ENCODE measurements at regions of chr4 and their contacts with region 1.

Region 1: DNA sequence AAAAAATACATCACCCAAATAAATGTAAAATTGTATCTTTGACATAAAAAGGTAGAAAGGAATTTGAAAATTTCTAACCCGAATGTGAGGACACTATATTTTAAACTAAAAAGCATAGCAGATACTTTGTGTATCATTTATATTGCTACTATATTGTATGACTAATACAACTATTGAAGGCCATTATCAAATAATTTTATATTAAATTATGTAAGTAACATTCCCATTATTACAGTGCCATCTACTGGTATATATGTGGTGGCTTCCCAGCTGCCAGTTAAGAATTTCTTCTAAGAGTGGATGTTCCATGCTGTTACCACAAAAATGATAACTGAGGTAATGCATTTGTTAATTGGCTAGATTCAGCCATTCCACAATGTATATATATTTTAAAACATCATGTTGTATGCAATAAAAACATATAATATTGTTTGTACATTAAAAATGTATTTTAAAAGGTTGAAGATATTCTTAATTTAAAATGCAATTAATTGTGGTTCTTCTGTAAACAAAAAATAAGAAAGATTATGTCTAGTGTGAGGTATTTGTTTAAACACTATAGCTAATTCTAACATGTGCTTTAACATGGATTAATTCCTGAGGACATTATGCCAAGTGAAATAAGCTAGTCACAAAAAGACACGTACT is 65.3 kb downstream of the EGF start:
- DNase-seq: no peak
- H3K4me3 Mint-ChIP-seq: no peak overlapping the region
- H3K27ac Mint-ChIP-seq: no peak overlapping the region
- H3K4me1 Mint-ChIP-seq: peaks cover 4% of the 10 kb centered on the region
- H3K27me3 Mint-ChIP-seq: peaks cover 16% of the 10 kb centered on the region

Region 2: DNA sequence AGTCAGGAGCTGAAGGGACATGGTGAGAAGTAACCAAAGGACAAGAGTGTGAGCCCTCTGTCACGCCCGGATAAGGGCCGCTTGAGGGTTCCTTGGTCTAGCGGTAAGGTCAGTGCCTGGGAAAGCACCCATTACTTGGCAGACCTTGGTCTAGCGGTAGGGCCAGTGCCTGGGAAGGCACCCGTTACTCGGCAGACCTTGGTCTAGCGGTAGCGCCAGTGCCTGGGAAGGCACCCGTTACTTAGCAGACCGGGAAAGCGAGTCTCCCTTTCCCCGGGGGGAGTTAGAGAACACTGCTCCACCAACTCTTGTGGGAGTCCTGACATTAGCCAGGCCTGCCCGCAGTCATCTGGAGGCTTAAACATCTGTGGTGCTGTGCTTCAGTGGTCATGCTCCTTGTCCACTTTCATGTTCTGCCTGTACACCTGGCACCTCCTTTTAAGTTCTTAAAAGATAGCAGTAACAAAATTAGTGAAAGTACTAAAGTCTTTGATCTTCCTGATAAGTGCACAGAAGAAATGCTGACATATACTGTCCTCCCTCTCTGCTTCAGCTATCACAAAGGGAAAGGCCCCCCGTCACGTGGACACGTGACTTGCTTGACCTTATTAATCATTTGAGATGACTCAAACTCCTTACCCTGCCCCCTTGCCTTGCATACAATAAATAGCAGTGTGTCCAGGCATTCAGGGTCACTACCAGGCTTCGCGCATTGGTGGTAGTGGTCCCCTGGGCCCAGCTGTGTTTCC is 553.7 kb before region 1 on chr4:
- CTCF ChIA-PET with region 1: interaction called, 14 read pairs
- DNase-seq: no peak
- H3K4me3 Mint-ChIP-seq: no peak overlapping the region
- H3K27ac Mint-ChIP-seq: no peak overlapping the region
- H3K4me1 Mint-ChIP-seq: peaks cover 3% of the 10 kb centered on the region
- H3K27me3 Mint-ChIP-seq: peaks cover 9% of the 10 kb centered on the region